GM10248 (cell line): ENCODE measurements at regions of chr7 and their contacts with region 1.

Region 1: GRCh38 chr7:77651573-77652162 is 44.6 kb upstream of the RSBN1L start:
- DNase-seq: peak; percentile 60
- CTCF ChIP-seq: peak; percentile 69

Region 2: DNA sequence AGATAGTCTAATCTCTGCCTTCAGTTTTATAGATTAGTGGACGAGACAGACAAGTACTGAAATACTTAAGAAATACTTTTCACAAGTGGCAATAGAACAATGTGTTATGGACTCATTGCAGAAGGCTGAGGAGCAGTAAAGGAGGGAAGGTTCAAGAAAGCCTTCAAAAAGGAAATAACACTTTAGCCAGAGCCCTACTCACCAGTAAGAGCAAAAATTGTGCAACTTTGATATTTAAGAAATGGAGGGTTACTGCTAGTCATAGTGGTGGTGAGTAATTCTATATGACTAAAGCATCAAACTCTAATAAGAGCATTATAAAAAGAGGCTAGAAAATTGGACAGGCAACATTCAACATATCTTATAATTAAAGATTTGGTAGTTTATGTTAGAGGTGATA is 85.8 kb before region 1 on chr7:
- CTCF ChIA-PET with region 1: no interaction called
- POLR2A ChIA-PET with region 1: no interaction called
- DNase-seq: no peak
- CTCF ChIP-seq: no peak

Region 3: DNA sequence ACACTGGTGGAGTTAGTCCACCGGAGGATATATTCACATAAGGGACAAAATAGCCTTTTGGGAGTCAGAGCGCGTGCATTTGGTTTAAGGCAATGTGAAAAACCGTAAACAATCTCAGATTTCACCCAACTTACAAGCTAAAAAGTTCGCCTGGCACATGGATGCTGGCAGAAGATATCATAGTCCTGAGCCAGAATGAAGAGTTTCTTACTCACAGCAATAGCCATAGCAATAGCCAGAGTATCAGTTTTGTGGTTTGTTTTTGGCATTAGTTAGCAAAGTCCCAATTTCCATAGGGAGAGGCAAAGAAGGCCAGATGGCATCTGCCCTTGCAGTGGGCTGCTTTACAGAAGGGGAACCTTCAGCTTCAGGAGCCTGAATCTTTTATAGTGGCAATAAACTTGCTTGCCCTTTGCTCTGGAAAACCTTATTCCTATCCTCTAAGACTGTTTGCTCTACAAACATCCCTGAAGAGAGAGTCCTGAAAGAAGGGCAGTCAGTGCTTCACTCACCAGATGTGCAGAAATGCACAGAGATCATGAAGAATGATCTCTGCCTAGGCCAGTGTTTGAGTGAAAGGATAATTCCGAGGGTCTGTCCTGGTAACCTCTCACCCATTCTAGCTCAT is 15.9 kb after region 1 on chr7:
- CTCF ChIA-PET with region 1: interaction called, 27 read pairs
- POLR2A ChIA-PET with region 1: no interaction called
- DNase-seq: no peak
- CTCF ChIP-seq: no peak

Region 4: DNA sequence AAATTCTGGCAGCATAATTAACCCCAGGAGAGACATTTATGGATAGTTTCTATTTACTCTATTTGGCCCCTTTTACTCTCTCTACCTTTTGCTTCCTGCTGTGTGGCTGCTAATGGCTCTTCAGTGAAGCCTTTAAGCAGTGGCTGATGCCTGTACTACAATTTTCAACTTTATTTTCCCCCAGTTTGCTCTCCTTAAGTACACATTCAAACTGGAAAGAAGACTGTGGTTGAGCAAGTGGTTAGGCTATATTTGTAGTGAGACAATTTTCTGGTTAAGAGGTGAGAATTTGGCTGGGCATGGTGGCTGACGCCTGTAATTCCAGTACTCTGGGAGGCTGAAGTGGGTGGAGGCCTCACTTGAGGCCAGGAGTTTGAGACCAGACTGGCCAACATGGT is 36.1 kb after region 1 on chr7:
- CTCF ChIA-PET with region 1: interaction called, 19 read pairs
- POLR2A ChIA-PET with region 1: no interaction called
- DNase-seq: no peak
- CTCF ChIP-seq: no peak

Region 5: GRCh38 chr7:77759294-77759889 is 107.7 kb after region 1 on chr7:
- CTCF ChIA-PET with region 1: interaction called, 43 read pairs
- POLR2A ChIA-PET with region 1: no interaction called
- DNase-seq: peak; percentile 34
- CTCF ChIP-seq: peak; percentile 78

Region 6: DNA sequence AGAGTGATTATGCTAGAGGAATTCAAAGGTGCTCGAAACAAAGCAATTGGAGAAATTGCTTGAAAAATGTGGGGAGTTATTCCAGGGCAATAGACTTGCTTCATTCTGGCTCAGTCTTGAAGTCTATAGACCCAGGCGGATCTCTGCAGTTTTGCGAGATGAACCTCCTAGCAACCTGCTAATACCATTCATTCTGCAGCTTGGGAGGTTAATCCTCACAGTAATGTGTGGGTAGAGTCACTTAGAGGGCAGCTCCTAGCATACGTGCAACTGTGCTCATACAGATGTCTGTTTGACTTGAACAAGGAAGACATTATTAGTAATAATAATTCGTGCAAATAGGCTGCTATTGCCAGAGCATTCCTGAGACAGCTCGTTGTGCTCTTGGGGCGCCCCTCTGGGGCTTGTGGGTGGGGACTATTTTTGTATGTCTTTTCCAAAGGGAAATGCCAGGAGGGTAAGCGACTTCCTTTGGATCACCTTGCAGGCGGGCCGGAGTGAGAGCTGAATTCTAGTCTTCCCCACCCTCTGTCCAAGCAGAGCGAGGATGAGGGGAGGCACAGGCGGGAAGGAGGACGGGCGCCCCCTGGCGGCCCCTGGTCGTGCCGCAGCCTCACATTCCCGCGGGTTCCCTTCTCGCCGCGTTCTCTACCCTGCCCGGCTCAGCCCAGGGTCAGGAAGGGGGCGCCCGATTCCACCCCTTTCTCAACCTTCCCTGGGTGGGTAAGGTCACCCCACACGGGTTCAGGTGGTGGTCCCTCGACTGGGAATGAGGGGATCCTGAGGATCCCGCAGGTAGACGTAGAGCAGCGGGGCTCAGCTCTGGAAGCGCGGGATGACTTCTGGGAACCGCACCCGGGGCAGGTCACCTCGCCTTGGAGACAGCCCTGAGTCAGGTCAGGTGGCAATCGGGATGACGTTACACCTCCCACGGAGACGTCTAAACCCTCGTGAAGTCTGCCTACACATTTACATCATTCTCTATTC is 388.4 kb after region 1 on chr7:
- CTCF ChIA-PET with region 1: interaction called, 16 read pairs
- POLR2A ChIA-PET with region 1: no interaction called
- DNase-seq: peak; percentile 78
- CTCF ChIP-seq: peak; percentile 81